Ascending aorta (tissue), 2 donors: ENCODE measurements at regions of chr18 and their contacts with region 1.

Region 1: GRCh38 chr18:32287249-32287648 is 97.4 kb downstream of the MEP1B start:
- DNase-seq: peak; percentile 34 to 91
- H3K4me3 ChIP-seq: peak overlapping the region; percentile 41 to 54
- H3K27ac ChIP-seq: peak overlapping the region; percentile 91
- H3K4me1 ChIP-seq: peaks cover 4 to 41% of the 10 kb centered on the region in 2 donors
- H3K27me3 ChIP-seq: no peaks in the 10 kb centered on the region
- CTCF ChIP-seq: no peak

Region 2: DNA sequence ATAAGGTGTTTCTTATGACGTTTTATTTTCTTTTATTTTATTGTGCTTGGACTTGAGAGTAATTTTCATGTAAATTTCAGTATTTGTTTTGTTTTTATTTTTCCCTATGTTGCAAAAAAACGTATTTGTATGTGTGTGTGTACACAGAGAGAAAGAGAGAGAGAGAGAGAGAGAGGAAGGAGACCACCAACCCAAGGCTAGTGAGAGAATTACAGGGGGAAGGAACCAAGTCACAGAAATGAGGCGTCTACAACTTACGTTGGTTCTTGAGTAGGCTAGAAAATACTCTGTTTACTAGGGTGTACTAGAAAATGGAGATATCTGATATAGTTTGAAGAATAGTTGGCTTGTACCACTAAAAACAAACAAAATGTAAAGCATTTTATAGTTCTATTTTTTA is 1116.9 kb before region 1 on chr18:
- intact Hi-C with region 1: no loop called
- DNase-seq: no peak
- H3K4me3 ChIP-seq: no peak overlapping the region
- H3K27ac ChIP-seq: no peak overlapping the region
- H3K4me1 ChIP-seq: no peaks in the 10 kb centered on the region
- H3K27me3 ChIP-seq: no peaks in the 10 kb centered on the region
- CTCF ChIP-seq: no peak

Region 3: GRCh38 chr18:31942999-31943865 is 344.0 kb before region 1 on chr18 and contains the start of gene TRAPPC8:
- intact Hi-C with region 1: loop called (anchors 5 kb)
- DNase-seq: peak; percentile 94 to 99
- H3K4me3 ChIP-seq: peak within 1 kb of the TSS; percentile 87 to 95
- H3K27ac ChIP-seq: peak within 1 kb of the TSS; percentile 89 to 92
- H3K4me1 ChIP-seq: peaks cover 3 to 10% of the 10 kb centered on the region in 2 donors
- H3K27me3 ChIP-seq: no peaks in the 10 kb centered on the region
- CTCF ChIP-seq: peak in 1 of 3 experiments; percentile 32
- total RNA-seq, gene TRAPPC8: 6.8 TPM

Region 4: DNA sequence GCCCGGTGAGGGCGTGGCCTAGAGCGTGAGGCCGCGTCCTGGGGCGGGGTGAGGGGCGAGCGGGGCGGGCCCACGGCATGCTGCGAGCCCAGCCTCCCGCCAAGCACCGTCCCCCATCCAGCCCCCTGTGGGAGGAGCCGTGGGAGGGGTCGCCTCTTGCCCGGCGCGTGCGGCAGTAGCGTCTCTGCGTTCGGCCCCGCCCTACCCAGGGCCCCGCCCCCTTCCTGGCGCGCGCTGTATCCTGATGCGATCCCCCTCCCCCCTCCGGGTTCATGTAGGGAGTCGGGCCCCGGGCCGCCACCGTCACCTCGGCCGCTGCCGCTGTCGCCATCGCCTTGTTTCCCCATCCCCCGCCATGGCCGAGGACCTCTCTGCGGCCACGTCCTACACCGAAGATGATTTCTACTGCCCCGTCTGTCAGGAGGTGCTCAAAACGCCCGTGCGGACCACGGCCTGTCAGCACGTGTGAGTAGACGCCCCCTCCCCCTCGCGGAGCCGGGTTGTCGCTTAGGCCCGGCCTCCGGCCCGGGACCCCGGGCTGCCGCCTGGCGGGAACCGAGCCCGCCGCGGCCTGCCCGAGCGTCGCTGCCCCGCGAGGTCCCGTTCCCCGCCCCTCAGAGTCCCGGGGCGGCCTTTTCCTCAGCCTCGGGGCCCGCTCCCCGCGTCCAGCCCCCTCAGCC is 194.7 kb before region 1 on chr18:
- intact Hi-C with region 1: loop called (anchors 2 kb)
- DNase-seq: peak; percentile 92 to 99
- H3K4me3 ChIP-seq: peak overlapping the region; percentile 89 to 96
- H3K27ac ChIP-seq: peak overlapping the region; percentile 99 to 100
- H3K4me1 ChIP-seq: peaks cover 0 to 12% of the 10 kb centered on the region in 2 donors
- H3K27me3 ChIP-seq: no peaks in the 10 kb centered on the region
- CTCF ChIP-seq: no peak

Region 5: GRCh38 chr18:32301976-32302743 is 14.9 kb after region 1 on chr18:
- intact Hi-C with region 1: loop called (anchors 1 kb)
- DNase-seq: peak in 1 of 2 donors; percentile 72
- H3K4me3 ChIP-seq: no peak overlapping the region
- H3K27ac ChIP-seq: peak overlapping the region; percentile 82 to 91
- H3K4me1 ChIP-seq: peaks cover 4 to 21% of the 10 kb centered on the region in 2 donors
- H3K27me3 ChIP-seq: no peaks in the 10 kb centered on the region
- CTCF ChIP-seq: no peak

Region 6: GRCh38 chr18:32349728-32350395 is 62.6 kb after region 1 on chr18:
- intact Hi-C with region 1: loop called (anchors 2 kb)
- DNase-seq: peak; percentile 17 to 91
- H3K4me3 ChIP-seq: peak overlapping the region in 1 of 2 donors; percentile 1
- H3K27ac ChIP-seq: peak overlapping the region; percentile 78 to 85
- H3K4me1 ChIP-seq: peaks cover 0 to 47% of the 10 kb centered on the region in 2 donors
- H3K27me3 ChIP-seq: no peaks in the 10 kb centered on the region
- CTCF ChIP-seq: no peak